Activated CD8-positive, alpha-beta T cell treated with anti-CD3 and anti-CD28 coated beads for 36 hours (primary cell): ENCODE measurements at regions of chr15 and their contacts with region 1.

Region 1: DNA sequence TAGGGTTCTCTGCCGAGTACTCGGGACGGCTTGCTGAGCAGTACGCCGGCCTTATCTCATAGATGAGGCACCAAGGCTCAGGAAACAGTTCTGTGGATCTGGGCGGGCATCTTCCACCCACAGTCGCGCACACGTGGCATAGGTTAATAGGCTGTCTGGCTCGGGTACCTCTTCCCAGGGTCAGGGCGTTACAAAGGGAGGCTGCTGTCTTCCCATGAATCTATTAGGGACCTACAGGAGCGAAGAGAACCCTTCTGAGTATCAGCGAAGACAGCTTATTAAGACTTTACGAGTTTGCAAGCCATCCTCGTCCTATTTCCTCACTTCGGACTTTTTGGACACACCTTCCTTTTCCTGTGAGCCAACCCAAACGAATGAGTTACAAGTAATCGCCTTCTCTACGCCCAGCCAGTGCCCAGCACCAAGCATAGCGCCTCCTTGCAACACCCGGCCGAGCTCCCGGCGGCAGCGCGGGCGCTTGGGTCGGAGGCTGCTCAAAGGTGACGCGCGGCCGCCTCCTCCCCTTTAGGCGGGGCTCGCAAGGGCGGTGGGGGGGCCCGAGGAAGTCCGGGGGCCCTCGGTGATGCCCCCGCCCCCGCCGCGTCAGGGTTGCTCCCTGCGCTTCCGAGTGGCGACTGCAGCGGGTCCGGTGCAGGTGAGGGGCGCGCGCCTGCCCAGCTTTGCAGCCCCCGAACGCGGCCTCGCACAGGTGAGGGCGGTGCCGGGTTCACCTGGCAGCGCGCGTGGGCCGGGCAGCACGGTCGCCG is at the start of gene MCTP2:
- DNase-seq: peak; percentile 92
- ATAC-seq: peak; percentile 86
- H3K4me3 Mint-ChIP-seq: peak within 1 kb of the TSS; percentile 91
- H3K27ac Mint-ChIP-seq: peak within 1 kb of the TSS; percentile 96
- H3K4me1 Mint-ChIP-seq: peaks cover 67% of the 10 kb centered on the region
- H3K27me3 Mint-ChIP-seq: no peaks in the 10 kb centered on the region
- CTCF ChIP-seq: no peak
- total RNA-seq, gene MCTP2: 16.2 to 18.3 TPM

Region 2: DNA sequence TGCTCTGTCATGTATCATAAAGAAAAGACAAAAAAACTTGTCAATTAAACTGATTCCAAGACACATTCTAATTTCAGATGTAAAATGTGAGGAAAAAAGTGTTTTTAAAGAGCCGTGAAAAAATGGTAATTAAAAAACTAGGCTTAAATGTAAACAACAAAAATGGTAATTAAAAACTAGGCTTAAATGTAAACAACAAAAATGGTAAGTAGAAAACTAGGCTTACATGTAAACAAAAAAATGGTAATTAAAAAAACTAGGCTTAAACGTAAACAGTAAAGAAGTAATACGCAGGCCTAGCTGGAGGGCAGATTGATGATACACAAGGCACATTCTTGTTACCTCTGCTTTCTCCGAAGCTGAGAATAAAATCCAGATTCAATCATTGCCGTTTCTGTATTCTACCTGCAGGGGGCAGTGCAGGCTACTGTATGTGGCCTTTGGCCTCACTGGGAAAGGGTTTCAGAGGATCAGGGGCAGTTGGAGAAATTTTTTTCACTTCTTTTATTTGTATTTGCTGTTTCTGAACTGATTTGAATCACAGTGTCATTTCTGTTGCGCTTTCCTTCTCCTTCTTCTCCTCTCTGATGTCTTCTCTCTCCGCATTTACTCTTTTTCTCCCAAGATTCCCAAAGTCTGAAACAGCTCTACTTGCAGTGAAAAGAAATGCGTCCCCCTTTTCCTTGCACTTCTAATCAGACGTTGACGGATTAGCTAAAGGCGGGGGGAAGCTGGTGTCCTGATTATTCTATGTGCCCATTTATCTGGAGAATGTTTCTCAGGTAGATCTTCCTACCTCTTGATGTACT is 66.9 kb before region 1 on chr15:
- CTCF ChIA-PET with region 1: interaction called, 27 read pairs
- POLR2A ChIA-PET with region 1: no interaction called
- intact Hi-C with region 1: loop called (anchors 5 kb)
- DNase-seq: peak; percentile 74
- ATAC-seq: peak; percentile 72
- H3K4me3 Mint-ChIP-seq: no peak overlapping the region
- H3K27ac Mint-ChIP-seq: no peak overlapping the region
- H3K4me1 Mint-ChIP-seq: no peaks in the 10 kb centered on the region
- H3K27me3 Mint-ChIP-seq: peaks cover 4% of the 10 kb centered on the region
- CTCF ChIP-seq: peak; percentile 98

Region 3: DNA sequence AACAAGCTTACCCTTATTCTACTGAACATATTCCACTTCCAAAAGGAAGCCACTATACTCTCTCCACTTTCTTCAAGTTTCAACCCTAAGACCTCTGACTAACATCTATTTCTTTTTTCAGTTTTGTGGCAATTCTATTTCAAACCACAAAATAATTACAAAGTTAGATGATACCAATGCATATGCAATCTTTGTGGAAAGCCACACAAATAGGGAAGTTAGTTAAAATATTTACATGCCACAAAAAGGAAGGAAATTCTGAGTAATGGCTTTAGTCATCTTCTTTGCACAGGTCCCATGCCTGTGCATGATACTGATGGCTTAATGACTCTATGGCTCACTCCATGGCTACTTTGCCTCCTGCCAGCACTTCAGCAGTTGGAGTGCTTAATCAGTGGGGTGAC is 56.7 kb before region 1 on chr15:
- CTCF ChIA-PET with region 1: no interaction called
- POLR2A ChIA-PET with region 1: no interaction called
- intact Hi-C with region 1: loop called (anchors 5 kb)
- DNase-seq: peak; percentile 54
- ATAC-seq: peak; percentile 93
- H3K4me3 Mint-ChIP-seq: no peak overlapping the region
- H3K27ac Mint-ChIP-seq: no peak overlapping the region
- H3K4me1 Mint-ChIP-seq: peaks cover 27% of the 10 kb centered on the region
- H3K27me3 Mint-ChIP-seq: peaks cover 2% of the 10 kb centered on the region
- CTCF ChIP-seq: no peak

Region 4: GRCh38 chr15:94206463-94207167 is 24.5 kb before region 1 on chr15:
- CTCF ChIA-PET with region 1: no interaction called
- POLR2A ChIA-PET with region 1: interaction called, 3 read pairs
- intact Hi-C with region 1: loop called (anchors 2 kb)
- DNase-seq: peak; percentile 76
- ATAC-seq: peak; percentile 95
- H3K4me3 Mint-ChIP-seq: peak overlapping the region; percentile 43
- H3K27ac Mint-ChIP-seq: peak overlapping the region; percentile 71
- H3K4me1 Mint-ChIP-seq: peaks cover 14% of the 10 kb centered on the region
- H3K27me3 Mint-ChIP-seq: peaks cover 32% of the 10 kb centered on the region
- CTCF ChIP-seq: no peak

Region 5: DNA sequence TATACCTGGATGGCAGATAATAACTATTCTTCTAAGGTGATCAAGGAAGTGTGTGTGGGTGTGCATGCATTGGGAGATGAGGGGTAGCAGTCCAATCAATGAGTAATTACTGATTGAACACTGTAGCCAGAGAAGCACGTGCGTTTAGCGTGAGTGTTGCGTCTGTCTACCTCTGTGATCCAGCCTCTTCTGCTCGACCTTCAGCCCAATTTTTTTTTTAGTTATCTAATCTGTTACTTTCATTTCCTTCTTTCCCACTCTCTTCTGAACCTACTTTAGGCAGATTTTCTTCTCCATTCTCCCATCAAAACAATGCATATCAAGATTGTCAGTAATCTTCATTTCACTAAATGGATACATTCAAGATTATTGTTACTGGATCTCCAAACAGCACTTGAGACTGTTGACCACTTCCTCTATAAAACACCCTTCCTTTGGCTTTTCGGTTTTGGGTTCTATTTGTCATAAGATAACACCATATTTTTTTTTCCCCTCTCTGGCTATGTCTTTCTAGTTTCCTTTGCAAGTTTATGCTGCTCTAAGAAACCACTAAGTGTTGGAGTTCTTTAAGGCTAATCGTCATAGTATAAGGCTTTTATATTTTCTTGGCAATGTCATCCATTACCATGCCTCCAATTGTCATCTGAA is 41.2 kb after region 1 on chr15:
- CTCF ChIA-PET with region 1: no interaction called
- POLR2A ChIA-PET with region 1: interaction called, 7 read pairs
- intact Hi-C with region 1: loop called (anchors 2 kb)
- DNase-seq: peak; percentile 40
- ATAC-seq: peak; percentile 84
- H3K4me3 Mint-ChIP-seq: no peak overlapping the region
- H3K27ac Mint-ChIP-seq: no peak overlapping the region
- H3K4me1 Mint-ChIP-seq: peaks cover 16% of the 10 kb centered on the region
- H3K27me3 Mint-ChIP-seq: no peaks in the 10 kb centered on the region
- CTCF ChIP-seq: no peak